CD4-positive, alpha-beta T cell (primary cell): ENCODE measurements at regions of chr17 and their contacts with region 1.

Region 1: DNA sequence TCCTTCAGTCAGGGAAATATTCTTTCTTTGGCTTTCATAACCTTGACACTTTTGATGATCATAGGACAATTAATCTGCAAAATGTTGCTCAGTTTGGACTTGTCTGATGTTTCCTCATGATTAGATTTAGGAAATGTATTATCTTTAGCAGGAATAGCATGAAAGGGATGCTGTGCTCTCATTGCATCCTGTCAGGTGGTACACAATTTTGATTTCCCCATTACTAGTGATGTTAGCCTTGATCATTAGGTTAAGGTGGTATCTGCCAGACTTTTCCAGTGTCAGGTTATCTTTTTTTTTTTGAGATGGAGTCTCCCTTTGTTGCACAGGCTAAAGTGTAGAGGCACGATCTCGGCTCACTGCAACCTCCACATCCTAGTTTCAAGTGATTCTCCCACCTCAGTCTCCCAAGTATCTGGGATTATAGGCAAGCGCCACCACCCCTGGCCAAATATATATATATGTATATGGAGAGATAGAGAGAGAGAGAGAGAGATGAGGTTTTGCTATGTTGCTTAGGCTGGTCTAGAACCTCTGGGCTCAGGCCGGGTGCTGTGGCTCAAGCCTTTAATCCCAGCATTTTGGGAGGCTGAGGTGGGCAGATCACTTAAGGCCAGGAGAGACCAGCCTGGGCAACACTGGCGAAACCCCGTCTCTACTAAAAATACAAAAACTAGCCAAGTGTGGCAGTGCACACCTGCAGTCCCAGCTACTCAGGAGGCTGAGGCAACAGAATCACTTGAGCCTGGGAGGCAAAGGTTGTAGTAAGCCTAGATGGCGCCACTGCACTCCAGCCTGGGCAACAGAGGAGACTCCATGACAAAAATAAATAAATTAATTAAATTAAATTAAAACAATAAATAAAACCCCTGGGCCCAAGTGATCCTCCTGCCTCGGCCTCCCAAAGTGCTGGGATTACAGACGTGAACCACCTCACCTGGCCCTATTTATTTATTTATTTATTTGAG is 15.8 kb upstream of the CAVIN1 start:
- DNase-seq: peak in 12 of 14 experiments; percentile 26 to 71 (median 40)
- ATAC-seq: peak; percentile 21
- H3K4me3 ChIP-seq: no peak overlapping the region
- H3K4me3 Mint-ChIP-seq: no peak overlapping the region
- H3K27ac ChIP-seq: no peak overlapping the region
- H3K27ac Mint-ChIP-seq: no peak overlapping the region
- H3K4me1 ChIP-seq: peaks cover 7% of the 10 kb centered on the region
- H3K4me1 Mint-ChIP-seq: peaks cover 10% of the 10 kb centered on the region
- H3K27me3 ChIP-seq: no peaks in the 10 kb centered on the region
- H3K27me3 Mint-ChIP-seq: no peaks in the 10 kb centered on the region
- CTCF ChIP-seq: peak; percentile 57

Region 2: DNA sequence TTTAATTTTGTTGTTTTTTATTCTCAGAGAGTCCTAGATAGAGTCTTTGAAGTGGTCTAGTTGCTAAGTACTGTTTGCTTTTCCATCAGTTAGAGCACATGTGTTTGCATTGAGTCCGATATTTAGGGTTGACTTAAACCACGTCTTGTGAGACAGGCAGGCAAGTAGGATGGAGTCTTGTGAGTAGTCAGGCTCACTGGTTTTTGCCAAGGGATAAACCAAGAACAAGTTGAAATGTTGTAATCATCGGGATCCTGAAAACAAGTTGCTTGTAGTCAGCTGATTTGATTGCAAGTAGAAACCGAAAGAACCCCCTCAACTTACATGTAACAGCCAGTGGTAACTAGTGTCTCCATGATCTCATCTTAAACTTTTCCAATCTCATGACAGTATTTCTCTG is 37.0 kb after region 1 on chr17:
- CTCF ChIA-PET with region 1: no interaction called
- POLR2A ChIA-PET with region 1: no interaction called
- intact Hi-C with region 1: loop called (anchors 5 to 10 kb)
- DNase-seq: no peak
- ATAC-seq: no peak
- H3K4me3 ChIP-seq: no peak overlapping the region
- H3K4me3 Mint-ChIP-seq: no peak overlapping the region
- H3K27ac ChIP-seq: no peak overlapping the region
- H3K27ac Mint-ChIP-seq: no peak overlapping the region
- H3K4me1 ChIP-seq: no peaks in the 10 kb centered on the region
- H3K4me1 Mint-ChIP-seq: peaks cover 6% of the 10 kb centered on the region
- H3K27me3 ChIP-seq: no peaks in the 10 kb centered on the region
- H3K27me3 Mint-ChIP-seq: no peaks in the 10 kb centered on the region
- CTCF ChIP-seq: no peak

Region 3: GRCh38 chr17:42484304-42484703 is 45.4 kb after region 1 on chr17:
- CTCF ChIA-PET with region 1: interaction called, 3 read pairs
- POLR2A ChIA-PET with region 1: interaction called, 3 read pairs
- intact Hi-C with region 1: loop called (anchors 5 to 10 kb)
- DNase-seq: peak; percentile 33 to 94 (median 50)
- ATAC-seq: peak; percentile 95
- H3K4me3 ChIP-seq: peak overlapping the region; percentile 10
- H3K4me3 Mint-ChIP-seq: peak overlapping the region; percentile 52
- H3K27ac ChIP-seq: no peak overlapping the region
- H3K27ac Mint-ChIP-seq: peak overlapping the region; percentile 32
- H3K4me1 ChIP-seq: peaks cover 33% of the 10 kb centered on the region
- H3K4me1 Mint-ChIP-seq: peaks cover 39% of the 10 kb centered on the region
- H3K27me3 ChIP-seq: no peaks in the 10 kb centered on the region
- H3K27me3 Mint-ChIP-seq: no peaks in the 10 kb centered on the region
- CTCF ChIP-seq: no peak